ENCODE measurements at regions of chr17 and their contacts with region 1.

Region 1: DNA sequence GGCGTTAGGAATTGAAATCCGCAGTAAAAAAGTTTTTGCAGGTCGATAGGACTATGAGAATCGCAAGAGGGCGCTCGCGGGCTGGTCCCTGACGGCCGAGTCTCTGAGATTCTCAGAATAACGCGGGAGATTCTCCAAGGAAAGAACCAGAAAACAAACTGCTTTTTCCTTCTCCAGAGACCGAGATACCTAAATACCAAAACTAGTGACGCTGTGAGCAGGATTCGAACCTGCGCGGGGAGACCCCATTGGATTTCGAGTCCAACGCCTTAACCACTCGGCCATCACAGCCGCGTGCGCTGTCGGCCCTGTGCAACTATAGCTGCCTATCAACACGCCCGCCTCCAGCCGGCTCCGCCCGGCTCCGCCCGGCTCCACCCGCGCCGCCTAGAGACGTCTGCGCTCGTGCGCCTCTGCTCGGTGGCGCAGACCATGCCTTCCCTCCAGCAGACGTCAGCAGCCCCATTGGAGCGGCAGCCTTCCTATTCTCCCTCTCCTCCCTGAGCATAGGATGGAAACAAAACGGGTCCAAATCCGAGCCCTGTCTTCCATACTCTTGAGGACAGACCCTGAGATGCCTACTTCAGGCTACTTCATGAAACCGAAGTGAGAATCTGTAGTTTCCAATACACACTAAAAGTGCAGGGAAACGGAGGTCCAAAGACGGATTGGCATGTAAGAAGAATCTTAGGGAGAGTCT is 13.4 kb downstream of the PER1 start:
- DNase-seq: peak; percentile 94 to 97 (median 97)
- H3K4me3 ChIP-seq: peak overlapping the region; percentile 33 to 81 (median 72)
- H3K27ac ChIP-seq: peak overlapping the region; percentile 40 to 80
- H3K4me1 ChIP-seq: peaks cover 5 to 23% (median 20%) of the 10 kb centered on the region in 4 experiments
- H3K27me3 ChIP-seq: no peaks in the 10 kb centered on the region

Region 2: GRCh38 chr17:7951143-7951803 is 187.5 kb before region 1 on chr17:
- CTCF ChIA-PET with region 1: no interaction called
- POLR2A ChIA-PET with region 1: no interaction called
- DNase-seq: no peak
- H3K4me3 ChIP-seq: no peak overlapping the region
- H3K27ac ChIP-seq: no peak overlapping the region
- H3K4me1 ChIP-seq: no peaks in the 10 kb centered on the region
- H3K27me3 ChIP-seq: no peaks in the 10 kb centered on the region

Region 3: DNA sequence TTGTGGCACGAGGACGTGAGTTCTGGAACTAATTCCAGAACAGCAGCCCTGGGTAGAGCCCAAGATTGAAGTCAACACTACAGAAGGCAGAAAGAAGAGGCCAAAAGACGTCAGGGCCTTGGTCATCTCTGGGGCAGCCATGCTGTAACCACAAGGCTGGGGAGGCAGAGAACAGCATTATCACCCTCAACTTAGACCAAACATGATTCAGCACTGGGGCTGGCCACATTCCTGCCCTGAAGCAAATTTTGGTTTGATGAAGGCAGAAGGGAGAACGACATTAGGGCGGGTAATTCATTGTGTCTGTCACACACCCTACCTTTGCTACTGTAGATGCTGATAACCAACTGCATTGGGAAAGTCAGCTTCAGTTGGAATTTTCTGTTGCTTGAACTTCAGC is 109.7 kb before region 1 on chr17:
- CTCF ChIA-PET with region 1: no interaction called
- POLR2A ChIA-PET with region 1: no interaction called
- DNase-seq: no peak
- H3K4me3 ChIP-seq: no peak overlapping the region
- H3K27ac ChIP-seq: no peak overlapping the region
- H3K4me1 ChIP-seq: no peaks in the 10 kb centered on the region
- H3K27me3 ChIP-seq: peaks cover 0 to 5% (median 0%) of the 10 kb centered on the region in 5 experiments

Region 4: DNA sequence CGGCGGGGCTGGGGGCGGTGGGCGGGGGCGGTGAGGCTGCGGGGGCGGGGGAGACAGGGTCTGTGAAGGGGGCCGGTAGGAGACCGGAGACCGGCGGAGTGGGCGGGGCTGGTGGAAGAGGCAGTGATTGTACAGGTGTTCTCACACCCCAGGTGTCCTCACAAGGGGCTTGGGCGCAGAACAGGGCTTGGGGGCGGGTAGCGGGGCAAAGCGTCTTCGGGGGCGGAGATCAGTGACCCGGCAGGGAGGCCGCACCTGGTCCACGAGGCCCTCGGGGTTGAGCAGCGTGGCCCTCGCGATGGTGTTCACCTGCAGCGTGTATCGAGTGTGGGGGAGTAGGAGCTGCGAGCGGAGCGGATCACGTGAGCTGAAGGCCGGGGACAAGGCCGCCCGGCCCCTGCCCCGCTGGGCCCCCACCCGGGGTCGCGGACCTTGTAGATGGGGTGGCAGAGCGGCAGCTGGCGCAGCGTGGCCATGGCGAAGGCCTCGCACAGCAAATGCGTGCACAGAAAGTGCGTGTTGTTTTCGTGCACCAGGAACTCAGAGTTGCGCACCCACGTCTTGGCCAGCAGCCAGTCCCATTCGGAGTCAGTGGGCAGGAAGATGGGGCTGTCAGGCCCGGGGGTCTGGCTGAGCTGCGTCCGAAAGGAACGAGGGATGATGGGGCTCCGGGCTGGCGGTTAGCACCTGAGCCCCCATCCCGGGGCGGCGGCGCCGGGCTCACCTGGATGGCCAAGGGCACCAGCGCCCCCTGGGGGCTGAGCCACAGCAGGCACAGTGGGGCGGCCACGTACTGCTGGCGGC is 29.0 kb before region 1 on chr17:
- CTCF ChIA-PET with region 1: no interaction called
- POLR2A ChIA-PET with region 1: no interaction called
- DNase-seq: peak; percentile 55 to 76 (median 71)
- H3K4me3 ChIP-seq: peak overlapping the region in 6 of 7 experiments; percentile 8 to 75 (median 57)
- H3K27ac ChIP-seq: no peak overlapping the region
- H3K4me1 ChIP-seq: peaks cover 0 to 21% (median 16%) of the 10 kb centered on the region in 4 experiments
- H3K27me3 ChIP-seq: peaks cover 2 to 16% (median 2%) of the 10 kb centered on the region in 5 experiments

Region 5: GRCh38 chr17:8125157-8125946 is 13.5 kb before region 1 on chr17:
- CTCF ChIA-PET with region 1: interaction called, 48 read pairs
- POLR2A ChIA-PET with region 1: interaction called, 6 read pairs
- DNase-seq: peak; percentile 78 to 84 (median 83)
- H3K4me3 ChIP-seq: peak overlapping the region; percentile 74 to 93 (median 82)
- H3K27ac ChIP-seq: no peak overlapping the region
- H3K4me1 ChIP-seq: peaks cover 12 to 66% (median 65%) of the 10 kb centered on the region in 4 experiments
- H3K27me3 ChIP-seq: peaks cover 7 to 47% (median 23%) of the 10 kb centered on the region in 5 experiments

Region 6: GRCh38 chr17:8151123-8151640 is 12.4 kb after region 1 on chr17:
- CTCF ChIA-PET with region 1: interaction called, 292 read pairs
- POLR2A ChIA-PET with region 1: interaction called, 24 read pairs
- DNase-seq: peak; percentile 88 to 92 (median 90)
- H3K4me3 ChIP-seq: peak overlapping the region; percentile 61 to 94 (median 80)
- H3K27ac ChIP-seq: peak overlapping the region; percentile 85 to 92
- H3K4me1 ChIP-seq: peaks cover 12 to 62% (median 60%) of the 10 kb centered on the region in 4 experiments
- H3K27me3 ChIP-seq: no peaks in the 10 kb centered on the region

Region 7: DNA sequence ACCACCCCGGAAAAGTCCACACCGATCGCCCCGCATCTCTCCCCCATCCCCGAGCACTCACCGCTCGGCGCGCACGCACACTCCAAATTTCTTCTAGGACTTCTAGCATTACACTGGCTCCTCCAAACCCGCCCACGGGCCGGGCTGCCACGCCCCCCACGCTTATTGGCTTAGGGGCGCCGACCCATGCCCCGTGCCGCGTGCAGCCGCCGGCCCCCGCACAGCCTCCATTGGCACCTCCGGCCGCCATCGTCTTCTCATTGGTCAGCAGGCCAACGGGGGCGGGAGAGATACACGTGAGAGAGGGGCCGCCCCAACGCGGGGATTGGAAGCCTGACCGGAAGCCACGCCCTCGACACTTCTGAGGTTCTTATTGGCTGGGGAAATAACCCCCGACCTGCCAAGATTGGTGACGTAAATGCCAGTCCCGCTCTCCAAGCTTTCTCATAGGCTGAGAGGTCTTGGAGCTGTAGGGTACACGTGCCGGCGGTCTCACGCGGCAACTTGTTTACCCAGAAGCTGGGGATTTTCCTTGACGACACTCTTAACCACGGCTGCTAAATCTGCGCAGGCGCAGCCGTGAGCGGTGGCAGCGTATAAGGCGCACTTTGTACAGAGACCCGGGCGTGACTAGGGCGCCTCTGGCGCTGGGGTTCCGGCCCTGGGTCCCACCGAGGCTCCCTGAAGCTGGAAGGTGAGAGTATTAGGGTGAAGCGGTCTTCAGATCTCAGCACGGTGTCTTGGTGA is 17.6 kb after region 1 on chr17:
- CTCF ChIA-PET with region 1: interaction called, 292 read pairs
- POLR2A ChIA-PET with region 1: interaction called, 24 read pairs
- DNase-seq: peak; percentile 100
- H3K4me3 ChIP-seq: peak overlapping the region; percentile 61 to 88 (median 73)
- H3K27ac ChIP-seq: peak overlapping the region; percentile 91 to 96
- H3K4me1 ChIP-seq: peaks cover 15 to 68% (median 65%) of the 10 kb centered on the region in 4 experiments
- H3K27me3 ChIP-seq: no peaks in the 10 kb centered on the region

Region 8: DNA sequence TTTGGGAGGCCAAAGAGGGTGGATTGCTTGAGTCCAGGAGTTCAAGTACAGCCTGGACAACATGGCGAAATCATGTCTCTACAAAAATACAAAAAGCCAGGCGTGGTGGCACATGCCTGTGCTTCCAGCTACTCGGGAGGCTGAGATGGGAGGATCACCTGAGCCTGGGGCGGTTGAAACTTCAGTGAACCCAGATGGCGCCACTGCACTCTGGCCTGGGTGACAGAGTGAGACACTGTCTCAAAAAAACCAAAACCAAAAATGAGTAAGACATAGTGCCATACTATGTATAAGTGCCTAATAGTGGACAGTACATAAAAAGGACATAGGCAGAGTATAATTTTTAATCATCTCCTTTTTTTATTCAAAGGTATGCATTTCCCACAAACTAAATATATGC is 105.0 kb after region 1 on chr17:
- CTCF ChIA-PET with region 1: no interaction called
- POLR2A ChIA-PET with region 1: no interaction called
- DNase-seq: peak in 2 of 3 donors; percentile 23 to 46
- H3K4me3 ChIP-seq: no peak overlapping the region
- H3K27ac ChIP-seq: no peak overlapping the region
- H3K4me1 ChIP-seq: peaks cover 0 to 12% (median 9%) of the 10 kb centered on the region in 4 experiments
- H3K27me3 ChIP-seq: no peaks in the 10 kb centered on the region

Measured in common myeloid progenitor, CD34-positive (primary cell).